Sigmoid colon (tissue), 7 donors: ENCODE measurements at regions of chr19 and their contacts with region 1.

Region 1: DNA sequence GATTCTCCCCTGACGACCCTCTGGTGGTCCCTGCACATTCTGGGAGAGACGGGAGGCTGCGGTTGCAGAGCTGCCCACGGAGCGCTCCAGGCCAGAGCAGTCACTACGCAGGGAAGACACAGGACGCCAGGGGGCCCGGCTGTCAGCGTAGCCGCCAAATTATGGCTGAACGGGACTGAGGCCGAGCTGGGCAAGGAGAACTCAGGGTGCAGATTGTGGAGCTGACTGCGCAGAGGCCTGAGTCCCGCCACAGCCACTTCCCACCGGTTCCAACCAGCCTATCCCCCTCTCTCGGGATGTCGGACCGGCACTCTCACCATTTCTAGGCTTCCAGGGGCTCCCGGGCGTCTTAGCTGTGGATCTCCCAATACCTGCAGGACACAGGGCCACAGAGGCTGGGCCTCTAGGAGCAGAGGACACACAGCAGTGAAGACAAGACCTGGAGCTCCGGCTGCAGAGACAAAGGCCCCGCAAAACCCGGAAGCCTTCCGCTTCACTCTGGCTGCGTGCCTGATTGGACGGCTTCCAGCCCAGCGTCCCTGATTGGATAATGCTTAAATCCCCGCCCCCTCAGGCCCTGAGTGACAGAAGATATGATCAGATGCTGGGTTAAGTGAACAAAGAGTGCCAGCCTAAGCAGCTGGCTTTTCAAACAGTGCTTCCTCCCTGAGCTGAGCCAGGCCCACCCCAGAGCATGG is at the start of gene ZNF737:
- DNase-seq: peak; percentile 98
- H3K4me3 ChIP-seq: peak within 1 kb of the TSS; percentile 55 to 83 (median 64)
- H3K27ac ChIP-seq: peak within 1 kb of the TSS; percentile 82 to 95 (median 88)
- H3K4me1 ChIP-seq: peaks cover 0 to 26% (median 14%) of the 10 kb centered on the region in 4 donors
- H3K27me3 ChIP-seq: no peaks in the 10 kb centered on the region
- CTCF ChIP-seq: peak in 3 of 4 experiments; percentile 18 to 42 (median 41)
- EP300 ChIP-seq: no peak
- POLR2A ChIP-seq: peak; percentile 50 to 73
- total RNA-seq, gene ZNF737: 9.5 to 17.7 (median 11.2) TPM

Region 2: GRCh38 chr19:20423381-20424197 is 141.9 kb before region 1 on chr19:
- intact Hi-C with region 1: loop called (anchors 5 kb)
- DNase-seq: peak; percentile 83
- H3K4me3 ChIP-seq: peak overlapping the region; percentile 57 to 69 (median 63)
- H3K27ac ChIP-seq: peak overlapping the region; percentile 84 to 90 (median 88)
- H3K4me1 ChIP-seq: peaks cover 0 to 13% (median 2%) of the 10 kb centered on the region in 4 donors
- H3K27me3 ChIP-seq: no peaks in the 10 kb centered on the region
- CTCF ChIP-seq: no peak
- EP300 ChIP-seq: no peak
- POLR2A ChIP-seq: no peak

Region 3: GRCh38 chr19:20513179-20513934 is 52.1 kb before region 1 on chr19:
- intact Hi-C with region 1: no loop called
- DNase-seq: no peak
- H3K4me3 ChIP-seq: no peak overlapping the region
- H3K27ac ChIP-seq: no peak overlapping the region
- H3K4me1 ChIP-seq: no peaks in the 10 kb centered on the region
- H3K27me3 ChIP-seq: no peaks in the 10 kb centered on the region
- CTCF ChIP-seq: no peak
- EP300 ChIP-seq: no peak
- POLR2A ChIP-seq: no peak

Region 4: DNA sequence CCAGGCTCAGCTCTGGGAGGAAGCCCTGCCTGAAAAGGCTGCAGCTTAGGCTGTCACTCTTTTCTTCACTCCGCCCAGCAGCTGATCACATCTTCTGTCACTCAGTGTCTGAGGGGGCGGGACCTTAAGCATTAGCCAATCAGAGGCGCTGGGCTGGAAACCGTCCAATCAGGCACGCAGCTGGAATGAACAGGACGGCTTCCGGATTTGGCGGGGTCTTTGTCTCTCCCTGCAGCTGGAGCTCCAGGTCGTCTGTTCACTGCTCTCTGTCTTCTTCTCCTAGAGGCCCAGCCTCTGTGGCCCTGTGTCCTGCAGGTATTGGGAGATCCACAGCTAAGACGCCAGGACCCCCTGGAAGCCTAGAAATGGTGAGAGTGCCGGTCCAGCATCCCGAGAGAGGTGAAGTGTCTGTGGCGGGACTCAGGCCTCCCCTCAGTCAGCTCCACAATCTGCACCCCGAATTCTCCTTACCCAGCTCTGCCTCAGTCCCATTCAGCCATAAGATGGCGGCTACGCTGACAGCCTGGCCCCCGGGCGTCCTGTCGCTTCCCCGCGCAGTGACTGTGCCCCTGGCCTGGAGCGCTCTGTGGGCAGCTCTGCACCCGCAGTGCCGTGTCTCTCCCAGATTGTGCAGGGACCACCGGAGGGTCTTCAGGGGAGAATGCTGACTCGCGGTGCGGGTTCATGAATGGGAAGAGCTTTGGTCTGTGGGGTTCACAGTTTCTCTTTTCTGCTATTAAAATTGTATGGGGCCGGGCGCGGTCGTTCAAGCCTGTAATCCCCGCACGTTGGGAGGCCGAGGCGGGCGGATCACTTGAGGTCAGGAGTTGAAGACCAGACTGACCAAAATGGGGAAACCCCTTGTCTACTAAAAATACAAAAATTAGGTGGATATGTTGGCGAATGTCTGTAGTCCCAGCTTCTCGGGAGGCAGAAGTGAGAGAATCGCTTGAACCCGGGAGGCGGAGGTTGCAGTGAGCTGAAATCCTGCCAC is 210.9 kb after region 1 on chr19 and contains the start of gene ZNF66:
- intact Hi-C with region 1: loop called (anchors 5 kb)
- DNase-seq: peak; percentile 98
- H3K4me3 ChIP-seq: peak within 1 kb of the TSS; percentile 64 to 77 (median 67)
- H3K27ac ChIP-seq: peak within 1 kb of the TSS; percentile 52 to 76 (median 63)
- H3K4me1 ChIP-seq: peaks cover 0 to 9% (median 4%) of the 10 kb centered on the region in 4 donors
- H3K27me3 ChIP-seq: no peaks in the 10 kb centered on the region
- CTCF ChIP-seq: no peak
- EP300 ChIP-seq: no peak
- POLR2A ChIP-seq: peak; percentile 32 to 48
- total RNA-seq, gene ZNF66: 1.7 to 3.9 (median 3.6) TPM

Region 5: GRCh38 chr19:20923077-20923871 is 357.8 kb after region 1 on chr19 and contains the start of gene ZNF85:
- intact Hi-C with region 1: loop called (anchors 5 kb)
- DNase-seq: peak; percentile 94
- H3K4me3 ChIP-seq: peak within 1 kb of the TSS; percentile 38 to 69 (median 62)
- H3K27ac ChIP-seq: peak within 1 kb of the TSS; percentile 81 to 92 (median 87)
- H3K4me1 ChIP-seq: peaks cover 0 to 7% (median 2%) of the 10 kb centered on the region in 4 donors
- H3K27me3 ChIP-seq: no peaks in the 10 kb centered on the region
- CTCF ChIP-seq: no peak
- EP300 ChIP-seq: no peak
- POLR2A ChIP-seq: no peak
- total RNA-seq, gene ZNF85: 3.6 to 6.1 (median 4.1) TPM